ENCODE measurements at regions of chr11 and their contacts with region 1.

Region 1: DNA sequence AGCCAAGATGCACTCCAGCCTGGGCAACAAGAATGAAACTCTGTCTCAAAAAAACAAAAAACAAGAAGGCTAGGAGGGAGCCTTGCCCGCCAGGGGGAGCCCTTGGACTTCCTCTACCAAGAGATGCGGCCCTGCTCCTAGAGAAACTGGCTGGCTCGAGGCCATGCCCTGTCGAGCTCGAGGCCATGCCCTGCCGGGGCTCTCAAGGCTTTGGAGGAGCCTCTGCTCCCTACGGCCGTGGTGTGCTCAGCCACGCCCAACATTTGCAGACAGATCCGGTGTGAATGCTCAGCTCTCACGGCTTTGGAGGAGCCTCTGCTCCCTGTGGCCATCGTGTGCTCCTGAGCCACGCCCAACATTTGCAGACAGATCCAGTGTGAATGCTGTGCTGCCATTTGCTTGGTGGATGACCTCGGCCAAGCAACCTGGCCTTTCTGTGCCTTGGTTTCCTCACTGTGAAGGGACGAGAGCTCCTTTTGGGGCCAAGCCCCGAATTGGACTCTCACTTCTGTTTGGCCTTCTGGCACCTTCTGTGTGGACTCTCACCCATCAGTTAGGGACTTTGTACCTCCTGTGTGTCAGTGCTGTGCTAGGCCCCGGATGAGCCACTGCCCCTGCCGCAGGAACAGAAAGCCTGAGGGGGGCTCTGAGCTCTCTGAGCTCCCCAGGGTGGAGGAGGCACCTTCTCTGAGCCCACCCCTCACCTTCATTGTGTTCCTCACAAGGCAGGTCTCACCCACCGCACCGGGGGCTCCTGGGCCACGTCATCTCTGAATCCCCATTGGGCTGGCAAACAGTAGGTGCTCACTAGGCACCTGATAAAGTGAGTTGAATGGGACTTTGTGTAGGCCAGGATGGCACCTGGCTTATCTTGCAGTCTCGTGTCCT is 14.1 kb downstream of the C11orf24 start:
- DNase-seq: no peak
- ATAC-seq: peak; percentile 99
- H3K4me3 ChIP-seq: no peak overlapping the region
- H3K27ac ChIP-seq: no peak overlapping the region
- H3K4me1 ChIP-seq: peaks cover 4% of the 10 kb centered on the region
- H3K27me3 ChIP-seq: no peaks in the 10 kb centered on the region; a peak in 1 of 4 replicates
- CTCF ChIP-seq: peak; percentile 74 to 78 (median 77)
- EP300 ChIP-seq: no peak
- POLR2A ChIP-seq: no peak; the same call in 1 of the 2 replicates
- RAD21 ChIP-seq: peak; percentile 97

Region 2: GRCh38 chr11:68271781-68272608 is 14.3 kb after region 1 on chr11 and contains the start of gene C11orf24:
- CTCF ChIA-PET with region 1: interaction called, 30 read pairs
- POLR2A ChIA-PET with region 1: interaction called, 4 read pairs
- RAD21 ChIA-PET with region 1: interaction called, 39 read pairs
- SMC1A ChIA-PET with region 1: interaction called, 40 read pairs
- in situ Hi-C with region 1: no loop called
- intact Hi-C with region 1: no loop called
- DNase-seq: peak; percentile 82
- ATAC-seq: peak; percentile 84
- H3K4me3 ChIP-seq: peak within 1 kb of the TSS; percentile 97
- H3K27ac ChIP-seq: peak within 1 kb of the TSS; percentile 95
- H3K4me1 ChIP-seq: peaks cover 29% of the 10 kb centered on the region
- H3K27me3 ChIP-seq: no peaks in the 10 kb centered on the region
- CTCF ChIP-seq: no peak
- EP300 ChIP-seq: no peak
- POLR2A ChIP-seq: peak; percentile 93
- RAD21 ChIP-seq: no peak
- polyA plus RNA-seq, gene C11orf24: 4.3 to 9.9 TPM

Region 3: GRCh38 chr11:68447015-68447801 is 189.5 kb after region 1 on chr11:
- CTCF ChIA-PET with region 1: interaction called, 3 read pairs
- POLR2A ChIA-PET with region 1: no interaction called
- RAD21 ChIA-PET with region 1: interaction called, 7 read pairs
- SMC1A ChIA-PET with region 1: no interaction called
- in situ Hi-C with region 1: no loop called
- intact Hi-C with region 1: loop called (anchors 2 kb)
- DNase-seq: no peak
- ATAC-seq: peak; percentile 100
- H3K4me3 ChIP-seq: no peak overlapping the region
- H3K27ac ChIP-seq: no peak overlapping the region
- H3K4me1 ChIP-seq: no peaks in the 10 kb centered on the region
- H3K27me3 ChIP-seq: no peaks in the 10 kb centered on the region
- CTCF ChIP-seq: peak; percentile 90 to 95 (median 91)
- EP300 ChIP-seq: no peak
- POLR2A ChIP-seq: no peak
- RAD21 ChIP-seq: peak; percentile 82

Region 4: GRCh38 chr11:68727785-68728184 is 470.1 kb after region 1 on chr11:
- CTCF ChIA-PET with region 1: no interaction called
- POLR2A ChIA-PET with region 1: no interaction called
- RAD21 ChIA-PET with region 1: no interaction called
- SMC1A ChIA-PET with region 1: no interaction called
- in situ Hi-C with region 1: no loop called
- intact Hi-C with region 1: no loop called
- DNase-seq: no peak
- ATAC-seq: no peak
- H3K4me3 ChIP-seq: no peak overlapping the region
- H3K27ac ChIP-seq: no peak overlapping the region
- H3K4me1 ChIP-seq: no peaks in the 10 kb centered on the region
- H3K27me3 ChIP-seq: peaks cover 0 to 1% of the 10 kb centered on the region in 2 experiments; a peak in 2 of 4 replicates
- CTCF ChIP-seq: no peak
- EP300 ChIP-seq: no peak
- POLR2A ChIP-seq: no peak
- RAD21 ChIP-seq: no peak

Measured in GM12878 (cell line).